Dendritic cell treated with granulocyte-macrophage colony-stimulating factor and Interleukin-4, amounts not matched to agents 40 ng/mL and 50 ng/mL, for 4 days (primary cell): ENCODE measurements at regions of chr12 and their contacts with region 1.

Region 1: GRCh38 chr12:10749700-10750384 is 26.7 kb upstream of the YBX3 start:
- H3K4me3 Mint-ChIP-seq: peak overlapping the region; percentile 59
- H3K27ac Mint-ChIP-seq: no peak overlapping the region
- H3K4me1 Mint-ChIP-seq: peaks cover 13% of the 10 kb centered on the region
- H3K27me3 Mint-ChIP-seq: peaks cover 17% of the 10 kb centered on the region

Region 2: DNA sequence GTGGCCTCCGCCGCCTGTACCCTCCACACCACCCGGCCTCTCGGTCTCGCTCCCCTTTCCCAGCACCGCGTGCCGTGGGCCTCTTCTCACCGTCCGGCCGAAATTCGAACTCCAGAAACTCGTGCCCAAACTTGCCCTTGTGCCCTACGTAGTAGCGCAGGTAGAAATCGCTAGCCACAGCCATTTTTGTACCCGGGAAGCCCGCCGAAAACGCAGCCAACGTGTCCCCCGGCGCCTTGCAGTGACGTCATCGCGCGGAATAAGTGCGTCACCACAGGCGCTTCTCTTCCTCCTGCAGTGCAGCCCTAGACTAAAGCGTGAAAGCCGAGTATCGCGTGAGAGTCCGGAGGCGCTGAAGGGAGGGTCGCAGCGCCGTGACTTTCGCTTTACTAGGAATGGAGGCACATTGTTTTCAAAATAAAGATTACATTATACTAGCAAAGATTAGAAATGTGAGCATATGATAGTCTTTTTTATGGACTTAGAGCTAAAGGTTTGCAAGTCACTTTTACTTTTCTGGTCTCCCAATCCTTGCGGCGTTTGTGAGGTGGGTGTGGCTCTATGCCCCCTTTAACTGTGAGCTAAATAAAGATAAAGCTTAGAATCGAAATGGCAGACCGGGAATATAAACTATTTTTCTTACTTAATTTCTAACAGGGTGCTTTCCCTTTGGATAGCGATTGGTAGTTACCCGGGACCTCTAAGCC is 136.3 kb before region 1 on chr12 and contains the start of gene MAGOHB:
- intact Hi-C with region 1: loop called (anchors 1 kb)
- H3K4me3 Mint-ChIP-seq: peak within 1 kb of the TSS; percentile 100
- H3K27ac Mint-ChIP-seq: peak within 1 kb of the TSS; percentile 100
- H3K4me1 Mint-ChIP-seq: peaks cover 14% of the 10 kb centered on the region
- H3K27me3 Mint-ChIP-seq: no peaks in the 10 kb centered on the region

Region 3: GRCh38 chr12:10716704-10717315 is 33.0 kb before region 1 on chr12:
- intact Hi-C with region 1: loop called (anchors 5 kb)
- H3K4me3 Mint-ChIP-seq: no peak overlapping the region
- H3K27ac Mint-ChIP-seq: no peak overlapping the region
- H3K4me1 Mint-ChIP-seq: peaks cover 25% of the 10 kb centered on the region
- H3K27me3 Mint-ChIP-seq: no peaks in the 10 kb centered on the region

Region 4: DNA sequence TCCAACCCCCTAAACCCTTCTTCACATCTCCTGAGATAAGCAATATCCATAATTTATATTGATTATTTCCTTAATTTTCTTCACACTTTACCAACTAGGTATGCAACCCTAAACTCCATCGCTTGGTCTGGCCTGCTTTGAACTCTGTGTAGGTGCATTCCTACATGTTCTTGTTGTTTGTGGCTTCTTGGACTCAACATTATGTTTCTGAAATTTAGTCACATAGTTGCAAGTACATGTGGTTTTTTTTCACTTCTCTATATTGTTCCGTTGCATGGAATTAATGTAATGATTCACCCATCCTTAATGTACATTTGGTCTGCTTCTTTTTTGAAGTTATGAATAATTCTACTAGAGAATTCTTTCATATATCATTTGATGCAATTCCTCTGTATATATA is 386.2 kb after region 1 on chr12:
- intact Hi-C with region 1: no loop called
- H3K4me3 Mint-ChIP-seq: no peak overlapping the region
- H3K27ac Mint-ChIP-seq: no peak overlapping the region
- H3K4me1 Mint-ChIP-seq: peaks cover 16% of the 10 kb centered on the region
- H3K27me3 Mint-ChIP-seq: no peaks in the 10 kb centered on the region

Region 5: DNA sequence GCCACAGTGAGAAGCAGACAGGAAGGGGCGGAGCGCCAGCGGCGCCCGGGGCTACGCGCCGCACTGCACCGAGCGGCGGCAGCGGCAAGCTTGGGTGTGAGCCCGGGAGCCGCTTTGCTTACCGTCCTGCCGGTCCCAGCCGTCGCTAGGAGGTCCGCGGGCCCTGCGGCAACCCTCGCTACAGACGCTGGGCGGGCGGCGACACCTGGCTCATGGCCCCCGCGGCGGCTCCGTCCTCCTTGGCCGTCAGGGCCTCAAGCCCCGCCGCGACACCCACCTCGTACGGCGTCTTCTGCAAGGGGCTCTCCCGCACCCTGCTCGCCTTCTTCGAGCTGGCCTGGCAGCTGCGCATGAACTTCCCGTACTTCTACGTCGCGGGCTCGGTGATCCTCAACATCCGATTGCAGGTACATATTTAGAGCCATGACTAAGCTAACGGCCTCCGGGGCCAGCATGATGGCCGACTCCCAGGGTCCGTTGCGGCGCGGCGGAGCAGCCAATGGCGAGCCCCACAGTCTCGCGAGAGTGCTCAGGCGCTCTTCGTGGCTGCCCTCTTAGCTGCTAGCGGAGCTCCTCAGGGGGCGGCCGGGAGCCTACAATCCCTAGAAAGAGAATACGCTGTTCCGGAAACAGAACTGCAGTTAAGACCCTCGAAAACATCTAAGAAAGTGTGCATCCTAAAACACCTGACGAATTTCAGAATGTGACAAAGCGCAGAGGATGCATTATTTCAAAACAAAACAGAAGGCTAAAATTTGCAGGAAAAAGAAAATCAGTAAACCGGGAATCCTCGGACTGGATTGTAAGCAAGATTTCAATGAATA is 421.5 kb after region 1 on chr12 and contains the start of gene SMIM10L1:
- intact Hi-C with region 1: loop called (anchors 2 kb)
- H3K4me3 Mint-ChIP-seq: peak within 1 kb of the TSS; percentile 99
- H3K27ac Mint-ChIP-seq: peak within 1 kb of the TSS; percentile 100
- H3K4me1 Mint-ChIP-seq: peaks cover 46% of the 10 kb centered on the region
- H3K27me3 Mint-ChIP-seq: no peaks in the 10 kb centered on the region